ENCODE measurements at regions of chr3 and their contacts with region 1.

Region 1: DNA sequence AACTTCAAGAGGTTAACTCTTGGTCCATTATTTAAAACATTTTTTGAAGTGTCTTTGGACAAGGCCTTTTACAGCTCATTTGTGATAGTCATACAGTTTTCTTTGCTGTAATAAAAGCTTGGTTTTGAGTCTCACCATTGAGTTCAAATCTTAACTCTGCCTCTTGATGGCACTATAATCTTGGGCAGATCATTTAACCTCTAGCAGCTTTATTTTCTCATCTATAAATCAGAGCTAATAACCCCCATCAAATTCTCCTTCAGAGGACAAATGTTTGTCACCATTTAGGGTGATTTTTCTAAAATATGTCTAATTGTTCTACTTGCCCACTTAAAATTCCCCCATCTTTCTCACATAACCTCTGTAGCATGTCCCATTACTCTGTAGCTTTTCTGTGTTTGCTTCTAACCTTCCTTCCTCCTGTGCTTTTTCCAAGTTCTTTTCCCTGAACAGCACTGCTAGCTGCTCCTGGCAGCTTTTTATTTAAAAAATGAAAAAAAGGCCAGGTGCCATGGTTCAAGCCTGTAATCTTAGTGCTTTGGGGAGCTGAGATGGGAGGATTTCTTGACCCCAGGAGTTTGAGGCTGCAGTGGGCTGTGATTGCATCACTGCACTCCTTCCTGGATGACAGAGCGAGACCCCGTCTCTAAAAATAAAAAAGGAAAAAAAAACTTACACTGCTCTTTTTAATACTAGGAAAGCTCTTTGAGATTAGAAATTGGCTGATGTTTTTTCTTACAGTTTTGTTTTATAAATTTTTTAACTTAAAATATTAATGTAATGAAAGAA is 28.5 kb downstream of the UBE2E1 start:
- DNase-seq: no peak
- ATAC-seq: 0 out of 2 replicates have a peak, but pooled peaks have one; percentile 20
- H3K4me3 Mint-ChIP-seq: no peak overlapping the region
- H3K27ac Mint-ChIP-seq: peak overlapping the region; percentile 42; the same call in 1 of the 2 replicates
- H3K4me1 Mint-ChIP-seq: peaks cover 53% of the 10 kb centered on the region
- H3K27me3 Mint-ChIP-seq: no peaks in the 10 kb centered on the region
- CTCF ChIP-seq: no peak

Region 2: DNA sequence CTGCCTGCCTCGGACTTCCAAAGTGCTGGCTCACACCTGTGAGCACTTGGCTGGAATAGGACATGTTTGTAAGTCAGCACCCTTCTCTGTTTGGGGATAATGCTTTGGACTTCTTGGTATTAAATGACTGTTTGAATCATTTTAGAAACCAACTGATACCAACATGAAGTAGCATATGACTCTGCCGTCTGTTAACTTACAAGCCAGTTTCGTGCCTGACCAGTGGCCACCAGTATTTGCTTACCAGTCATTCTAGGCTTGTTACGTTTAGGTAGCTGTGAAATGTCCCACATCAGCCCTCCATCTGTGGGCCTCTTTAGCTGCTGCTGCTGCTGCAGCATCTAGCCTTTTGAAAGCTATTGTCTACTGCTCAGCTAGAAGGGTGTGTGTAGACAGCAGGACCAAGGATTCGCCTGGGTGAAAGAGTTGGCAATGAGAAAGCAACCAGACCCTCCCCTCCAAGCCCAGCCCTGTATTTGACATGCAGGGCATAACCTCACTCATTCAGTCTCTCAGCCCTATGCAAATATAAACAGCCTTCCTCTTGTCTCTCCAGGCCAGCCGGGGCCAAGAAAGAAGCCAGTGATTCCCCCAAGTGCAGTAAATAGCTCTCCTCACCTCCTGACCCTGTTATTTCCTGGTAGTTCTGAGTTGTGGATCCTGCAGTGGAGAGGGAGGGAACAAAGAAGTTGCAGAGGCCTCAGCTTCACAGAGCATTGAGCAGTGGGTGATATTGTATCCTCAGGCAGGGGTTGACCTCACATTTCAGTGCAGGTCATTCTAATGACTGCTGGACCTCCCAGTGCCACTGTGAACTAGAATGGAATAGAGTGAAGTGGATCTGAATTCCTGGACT is 31.5 kb after region 1 on chr3:
- CTCF ChIA-PET with region 1: interaction called, 17 read pairs
- POLR2A ChIA-PET with region 1: interaction called, 3 read pairs
- DNase-seq: peak; percentile 34
- ATAC-seq: peak; percentile 92
- H3K4me3 Mint-ChIP-seq: no peak overlapping the region
- H3K27ac Mint-ChIP-seq: peak overlapping the region; percentile 88
- H3K4me1 Mint-ChIP-seq: peaks cover 43% of the 10 kb centered on the region
- H3K27me3 Mint-ChIP-seq: no peaks in the 10 kb centered on the region
- CTCF ChIP-seq: no peak

Region 3: DNA sequence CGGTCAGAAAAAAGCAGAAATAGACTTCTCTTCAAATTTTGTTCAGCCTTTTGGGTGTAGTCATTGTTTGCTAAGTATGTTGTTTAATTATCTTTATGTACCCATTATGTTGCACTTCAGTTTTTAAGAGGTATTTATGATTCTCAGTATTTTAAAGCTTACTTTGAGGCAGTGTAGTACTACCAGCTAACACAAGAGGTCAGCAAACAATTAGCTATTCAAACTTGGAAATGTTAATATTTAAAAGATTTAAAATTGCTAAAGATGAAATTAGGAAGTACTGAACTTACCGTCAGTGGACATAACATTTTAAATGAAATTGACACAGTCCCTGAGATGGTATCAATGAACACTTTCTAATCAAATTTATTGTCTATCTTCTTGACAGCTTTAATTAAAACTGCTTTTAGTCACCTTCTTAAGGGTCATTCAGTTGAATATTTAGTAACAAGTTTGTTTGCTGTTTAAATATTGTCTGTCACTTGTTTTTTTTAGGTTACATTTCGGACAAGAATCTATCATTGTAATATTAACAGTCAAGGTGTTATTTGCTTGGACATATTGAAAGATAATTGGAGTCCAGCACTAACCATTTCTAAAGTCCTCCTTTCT is 54.4 kb after region 1 on chr3:
- CTCF ChIA-PET with region 1: interaction called, 15 read pairs
- POLR2A ChIA-PET with region 1: no interaction called
- DNase-seq: no peak
- ATAC-seq: no peak
- H3K4me3 Mint-ChIP-seq: no peak overlapping the region
- H3K27ac Mint-ChIP-seq: no peak overlapping the region
- H3K4me1 Mint-ChIP-seq: peaks cover 22% of the 10 kb centered on the region
- H3K27me3 Mint-ChIP-seq: no peaks in the 10 kb centered on the region
- CTCF ChIP-seq: 0 out of 2 replicates have a peak, but pooled peaks have one; percentile 42

Region 4: DNA sequence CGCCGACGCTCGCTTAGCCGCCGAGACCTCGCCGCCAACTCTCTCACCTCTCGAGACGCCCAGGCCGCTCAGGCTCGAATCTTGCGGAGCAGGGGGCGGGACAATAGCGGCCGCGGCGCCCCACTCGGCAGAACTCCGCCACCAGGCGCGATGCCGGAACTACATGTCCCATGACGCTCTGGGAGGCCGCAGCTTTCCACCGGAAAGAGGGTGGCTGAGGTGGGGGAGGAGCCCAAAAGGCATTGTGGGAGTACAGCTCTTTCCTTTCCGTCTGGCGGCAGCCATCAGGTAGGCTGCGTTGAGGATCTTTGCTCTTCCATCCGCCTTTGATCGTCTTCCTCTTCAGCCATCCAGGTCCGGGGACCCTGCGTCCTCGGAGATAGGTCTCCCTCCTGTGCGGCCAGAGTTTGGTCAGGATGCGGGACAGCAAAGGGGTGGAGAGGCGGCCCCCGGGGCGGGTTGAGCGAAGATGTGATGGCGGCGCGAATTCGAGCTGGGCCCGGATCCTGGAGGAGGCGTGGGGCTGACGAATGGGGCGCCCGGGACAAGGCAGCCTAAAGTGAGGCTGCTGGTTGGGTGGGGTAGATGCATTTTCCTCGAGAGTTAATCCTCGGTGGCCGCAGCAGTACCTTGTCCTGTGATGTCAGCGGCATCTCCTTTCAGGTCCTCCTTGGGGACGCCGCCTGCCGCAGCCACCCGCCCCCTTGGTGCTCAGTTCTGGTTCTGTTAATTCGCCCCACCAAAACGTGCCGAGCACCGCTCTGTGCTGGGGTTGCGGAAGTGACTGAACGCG is 82.8 kb after region 1 on chr3 and contains the starts of genes NKIRAS1 and RPL15:
- CTCF ChIA-PET with region 1: interaction called, 4 read pairs
- POLR2A ChIA-PET with region 1: interaction called, 11 read pairs
- DNase-seq: peak; percentile 97
- ATAC-seq: peak; percentile 93
- H3K4me3 Mint-ChIP-seq: peak within 1 kb of the TSS; percentile 99
- H3K27ac Mint-ChIP-seq: peak within 1 kb of the TSS; percentile 98
- H3K4me1 Mint-ChIP-seq: peaks cover 45% of the 10 kb centered on the region
- H3K27me3 Mint-ChIP-seq: peaks cover 6% of the 10 kb centered on the region; the same call in 1 of the 2 replicates
- CTCF ChIP-seq: peak; percentile 36
- total RNA-seq, gene NKIRAS1: 6.6 to 7.3 TPM (median 6.8 TPM) in 3 replicates
- total RNA-seq, gene RPL15: 2,428 to 2,870 TPM (median 2,865 TPM) in 3 replicates